Aorta (tissue), 5 donors: ENCODE measurements at regions of chr12 and their contacts with region 1.

Region 1: DNA sequence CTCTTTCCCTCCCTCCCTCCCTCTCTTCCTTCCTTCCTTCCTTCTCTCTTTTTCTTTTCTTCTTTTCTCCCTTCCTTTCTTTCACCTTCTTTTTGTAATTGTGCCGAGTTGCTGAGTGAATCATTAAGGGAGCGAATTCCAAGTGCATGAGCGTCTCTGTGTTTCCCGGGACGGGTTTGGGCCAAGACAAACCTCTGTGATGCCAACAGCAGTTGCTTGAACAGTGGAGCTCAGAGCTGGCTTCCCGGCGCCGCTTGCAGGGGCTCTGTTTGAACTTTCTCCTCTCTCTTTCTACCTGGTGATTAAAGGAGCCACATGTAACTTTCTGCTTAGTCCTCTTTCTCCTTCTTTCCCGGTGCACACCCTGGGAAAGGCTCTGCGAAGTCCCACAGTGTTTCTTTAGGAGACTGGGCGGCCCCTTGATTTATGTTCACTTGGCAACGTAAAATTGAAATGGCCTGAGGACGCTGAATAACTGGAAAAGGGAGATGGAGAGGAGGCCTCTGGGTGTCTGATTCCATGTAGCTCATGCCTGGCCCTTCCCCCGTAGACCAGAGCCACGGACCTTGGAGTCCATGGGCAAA is 33.7 kb upstream of the MAP1LC3B2 start:
- DNase-seq: peak; percentile 90 to 91
- ATAC-seq: peak; percentile 94
- H3K4me3 ChIP-seq: no peak overlapping the region
- H3K27ac ChIP-seq: peak overlapping the region; percentile 72 to 90
- H3K4me1 ChIP-seq: peaks cover 2 to 12% of the 10 kb centered on the region in 2 donors
- H3K27me3 ChIP-seq: no peaks in the 10 kb centered on the region

Region 2: GRCh38 chr12:116455540-116456329 is 69.8 kb before region 1 on chr12:
- intact Hi-C with region 1: loop called (anchors 5 kb)
- DNase-seq: peak; percentile 89
- ATAC-seq: peak; percentile 92
- H3K4me3 ChIP-seq: no peak overlapping the region
- H3K27ac ChIP-seq: peak overlapping the region; percentile 64 to 96
- H3K4me1 ChIP-seq: peaks cover 0 to 2% of the 10 kb centered on the region in 2 donors
- H3K27me3 ChIP-seq: no peaks in the 10 kb centered on the region

Region 3: DNA sequence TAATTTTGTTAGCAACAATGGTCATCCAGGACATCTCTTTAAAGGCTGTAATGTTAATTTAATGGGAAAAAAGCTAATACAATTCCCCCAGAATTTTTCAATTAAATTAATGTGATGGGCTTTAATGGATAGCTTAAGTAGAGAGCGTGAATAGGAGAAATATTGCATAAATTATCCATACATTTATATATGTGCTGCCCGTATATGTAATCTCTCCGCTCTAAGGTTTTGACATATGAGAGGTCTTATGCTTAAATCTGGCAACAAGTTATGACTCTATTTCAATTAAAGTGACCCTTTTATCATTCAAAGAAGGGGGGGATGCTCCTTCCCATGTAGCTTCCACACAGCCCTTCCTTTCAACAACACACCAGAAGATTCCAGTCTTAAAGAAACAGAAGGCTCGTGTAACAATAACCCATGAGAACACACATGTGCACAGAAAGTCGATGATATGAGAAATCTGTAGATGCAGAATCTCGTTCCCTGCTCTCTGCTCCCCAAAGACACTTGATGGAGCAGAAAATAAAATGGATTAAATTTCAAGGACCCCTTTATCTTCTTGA is 57.7 kb after region 1 on chr12:
- intact Hi-C with region 1: no loop called
- DNase-seq: no peak
- ATAC-seq: no peak
- H3K4me3 ChIP-seq: no peak overlapping the region
- H3K27ac ChIP-seq: no peak overlapping the region
- H3K4me1 ChIP-seq: no peaks in the 10 kb centered on the region
- H3K27me3 ChIP-seq: no peaks in the 10 kb centered on the region